ENCODE measurements at regions of chr18 and their contacts with region 1.

Region 1: DNA sequence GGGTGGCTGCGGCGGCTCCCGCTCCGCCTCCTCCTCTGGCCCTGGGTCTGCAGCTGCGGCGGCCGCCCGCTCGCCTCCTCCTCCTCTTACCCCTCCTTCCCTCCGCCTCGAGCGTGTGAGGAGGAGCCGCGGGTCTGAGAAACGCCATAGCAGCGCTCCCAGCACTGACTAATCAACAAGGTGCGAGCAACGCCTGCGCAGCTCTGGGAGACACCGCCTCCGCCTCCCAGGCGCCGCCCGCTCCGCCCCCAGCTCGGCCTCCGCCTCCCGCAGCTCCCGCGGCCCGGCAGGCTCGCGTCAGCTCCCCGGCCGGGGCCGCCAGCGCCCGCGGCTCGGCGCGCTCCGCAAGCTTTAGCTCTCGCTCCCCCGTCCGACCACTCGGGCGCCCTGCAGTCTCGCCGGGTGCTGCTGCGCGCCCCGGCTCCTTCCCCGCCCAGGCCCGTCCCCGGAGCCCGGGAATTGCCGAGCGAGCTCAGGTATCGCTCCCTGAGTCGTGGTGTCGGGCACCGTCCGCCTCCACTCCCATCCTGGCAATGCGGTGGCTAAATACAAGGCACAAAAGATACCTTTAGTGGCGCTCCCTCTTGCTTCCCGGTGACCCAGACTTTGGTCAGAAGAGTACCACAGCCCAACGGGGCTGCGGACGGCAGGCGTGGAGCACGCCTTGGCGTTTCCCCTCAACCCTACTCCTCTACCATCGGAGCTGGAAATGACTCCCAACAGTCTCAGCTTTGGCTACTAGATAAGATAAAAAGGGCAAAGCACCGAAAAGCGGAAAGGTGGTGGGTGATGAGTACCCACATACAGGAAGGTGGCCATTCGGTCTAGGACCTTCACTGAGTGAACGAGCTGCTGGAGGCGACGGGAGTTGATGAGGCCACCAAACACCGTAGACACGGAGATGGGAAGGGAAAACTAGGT is at the start of gene GAREM1:
- DNase-seq: peak; percentile 96
- H3K4me3 ChIP-seq: peak within 1 kb of the TSS; percentile 52 to 91 (median 77)
- H3K27ac ChIP-seq: peak within 1 kb of the TSS; percentile 88 to 94 (median 92)
- H3K4me1 ChIP-seq: peaks cover 0 to 34% (median 13%) of the 10 kb centered on the region in 4 donors
- H3K27me3 ChIP-seq: no peaks in the 10 kb centered on the region
- CTCF ChIP-seq: peak; percentile 47 to 77 (median 65)
- EP300 ChIP-seq: no peak
- POLR2A ChIP-seq: peak; percentile 80
- total RNA-seq, gene GAREM1: 7.9 to 47.6 (median 25.9) TPM

Region 2: GRCh38 chr18:32049393-32050171 is 421.4 kb before region 1 on chr18:
- in situ Hi-C with region 1: no loop called
- intact Hi-C with region 1: no loop called
- DNase-seq: peak; percentile 55
- H3K4me3 ChIP-seq: no peak overlapping the region
- H3K27ac ChIP-seq: peak overlapping the region; percentile 32 to 72 (median 56)
- H3K4me1 ChIP-seq: peaks cover 4 to 26% (median 9%) of the 10 kb centered on the region in 4 donors
- H3K27me3 ChIP-seq: no peaks in the 10 kb centered on the region
- CTCF ChIP-seq: no peak
- EP300 ChIP-seq: no peak
- POLR2A ChIP-seq: no peak

Region 3: DNA sequence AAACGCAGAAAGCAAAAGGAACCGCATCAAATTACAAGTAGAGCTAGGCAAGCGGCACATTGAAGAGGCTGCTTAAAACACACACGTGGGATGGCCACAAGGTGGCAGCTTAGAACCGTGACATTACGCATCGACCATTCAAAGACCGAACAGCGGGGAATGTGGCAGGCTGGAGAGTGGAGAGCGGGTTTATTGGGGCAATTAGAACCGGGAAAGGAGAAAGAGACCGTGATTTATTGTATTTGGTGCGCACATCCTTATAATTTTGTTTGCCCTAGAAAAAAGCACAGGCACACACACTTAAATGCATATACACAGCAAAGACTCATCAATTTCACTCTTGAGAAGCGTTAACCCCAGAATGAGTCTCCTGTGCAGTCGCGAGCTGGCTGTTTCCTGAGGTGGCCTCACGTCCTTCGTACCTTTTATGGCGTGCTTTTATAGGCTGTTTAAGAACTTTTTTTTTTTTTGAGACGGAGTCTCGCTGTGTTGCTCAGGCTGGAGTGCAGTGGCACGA is 312.8 kb before region 1 on chr18:
- in situ Hi-C with region 1: loop called in 2 of 4 experiments (anchors 10 to 25 kb)
- intact Hi-C with region 1: loop called (anchors 10 kb)
- DNase-seq: peak; percentile 87
- H3K4me3 ChIP-seq: peak overlapping the region in 3 of 4 donors; percentile 15 to 47 (median 21)
- H3K27ac ChIP-seq: peak overlapping the region; percentile 62 to 75 (median 66)
- H3K4me1 ChIP-seq: peaks cover 0 to 29% (median 14%) of the 10 kb centered on the region in 4 donors
- H3K27me3 ChIP-seq: no peaks in the 10 kb centered on the region
- CTCF ChIP-seq: peak; percentile 75 to 95 (median 83)
- EP300 ChIP-seq: no peak
- POLR2A ChIP-seq: no peak

Region 4: GRCh38 chr18:32261003-32261402 is 210.0 kb before region 1 on chr18:
- in situ Hi-C with region 1: loop called in 1 of 4 experiments (anchors 10 kb)
- intact Hi-C with region 1: no loop called
- DNase-seq: no peak
- H3K4me3 ChIP-seq: no peak overlapping the region
- H3K27ac ChIP-seq: no peak overlapping the region
- H3K4me1 ChIP-seq: peaks cover 0 to 23% (median 9%) of the 10 kb centered on the region in 4 donors
- H3K27me3 ChIP-seq: no peaks in the 10 kb centered on the region
- CTCF ChIP-seq: peak in 2 of 5 experiments; percentile 4 to 8
- EP300 ChIP-seq: no peak
- POLR2A ChIP-seq: no peak

Region 5: DNA sequence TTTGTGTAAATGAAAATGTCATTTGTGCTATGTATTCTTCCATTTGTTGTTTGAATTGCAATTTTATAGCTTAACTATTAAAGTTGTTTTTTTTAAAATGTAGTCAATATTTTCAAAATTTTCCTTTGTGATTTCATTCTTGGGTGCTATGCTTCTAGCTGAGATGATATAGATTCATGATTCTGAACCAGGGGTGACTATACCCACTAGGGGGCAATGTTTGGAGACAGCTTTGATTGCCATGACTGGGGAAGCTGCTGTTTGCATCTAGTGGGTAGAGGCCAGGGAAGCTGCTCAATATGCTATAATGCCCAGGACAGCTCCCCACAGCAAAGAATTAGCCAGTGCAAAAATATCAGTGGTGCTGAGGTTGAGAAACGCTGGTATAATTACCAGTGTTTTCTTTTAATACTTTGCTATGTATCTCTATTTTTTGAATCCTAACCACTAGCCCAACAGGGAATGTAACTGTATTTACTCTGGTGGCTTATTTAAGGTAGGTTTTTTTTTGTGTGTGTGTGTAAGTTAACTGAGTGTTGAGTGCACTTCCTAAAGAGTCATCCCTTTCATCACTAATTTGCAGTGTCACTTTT is 181.4 kb before region 1 on chr18:
- in situ Hi-C with region 1: loop called in 2 of 4 experiments (anchors 10 to 25 kb)
- intact Hi-C with region 1: loop called (anchors 5 kb)
- DNase-seq: peak; percentile 56
- H3K4me3 ChIP-seq: no peak overlapping the region
- H3K27ac ChIP-seq: no peak overlapping the region
- H3K4me1 ChIP-seq: no peaks in the 10 kb centered on the region
- H3K27me3 ChIP-seq: no peaks in the 10 kb centered on the region
- CTCF ChIP-seq: peak; percentile 53 to 67 (median 65)
- EP300 ChIP-seq: no peak
- POLR2A ChIP-seq: no peak

Region 6: GRCh38 chr18:32529722-32530420 is 58.9 kb after region 1 on chr18:
- in situ Hi-C with region 1: loop called in 1 of 4 experiments (anchors 10 kb)
- intact Hi-C with region 1: no loop called
- DNase-seq: no peak
- H3K4me3 ChIP-seq: no peak overlapping the region
- H3K27ac ChIP-seq: no peak overlapping the region
- H3K4me1 ChIP-seq: peaks cover 0 to 20% (median 8%) of the 10 kb centered on the region in 4 donors
- H3K27me3 ChIP-seq: no peaks in the 10 kb centered on the region
- CTCF ChIP-seq: no peak
- EP300 ChIP-seq: no peak
- POLR2A ChIP-seq: no peak

Region 7: DNA sequence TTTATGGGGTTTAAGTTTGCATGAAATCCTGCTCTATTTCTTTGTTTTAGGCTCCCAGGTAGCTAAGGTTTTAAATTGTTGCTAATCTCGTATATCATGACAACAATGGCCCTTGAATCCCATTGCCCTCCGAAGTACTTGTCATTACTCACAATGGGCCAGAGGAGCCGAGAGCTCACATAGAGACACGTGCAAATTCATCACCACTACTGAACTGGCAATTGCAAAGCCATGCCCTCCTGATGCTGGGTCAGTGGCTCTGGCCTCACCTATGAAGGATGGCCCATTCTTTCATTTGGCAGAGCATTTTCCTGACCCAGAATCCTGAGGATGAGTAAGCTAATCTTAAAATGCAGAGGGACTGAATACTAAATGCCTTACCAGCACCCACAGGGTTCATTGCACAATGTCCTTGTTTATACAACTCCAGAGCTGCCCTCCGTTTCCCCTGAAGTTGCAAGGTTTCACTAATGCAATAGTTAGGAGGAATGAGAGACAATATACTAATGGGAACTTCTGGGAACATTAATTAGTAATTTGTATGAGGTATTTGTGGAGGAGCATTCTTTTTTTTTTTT is 71.3 kb after region 1 on chr18:
- in situ Hi-C with region 1: no loop called
- intact Hi-C with region 1: no loop called
- DNase-seq: no peak
- H3K4me3 ChIP-seq: no peak overlapping the region
- H3K27ac ChIP-seq: no peak overlapping the region
- H3K4me1 ChIP-seq: no peaks in the 10 kb centered on the region
- H3K27me3 ChIP-seq: no peaks in the 10 kb centered on the region
- CTCF ChIP-seq: no peak
- EP300 ChIP-seq: no peak
- POLR2A ChIP-seq: no peak